Activated CD4-positive, alpha-beta memory T cell treated with anti-CD3 and anti-CD28 coated beads, Interleukin-2, amount 10 ng/mL, durations not matched to agents 7 days and 5 days (primary cell): ENCODE measurements at regions of chr6 and their contacts with region 1.

Region 1: DNA sequence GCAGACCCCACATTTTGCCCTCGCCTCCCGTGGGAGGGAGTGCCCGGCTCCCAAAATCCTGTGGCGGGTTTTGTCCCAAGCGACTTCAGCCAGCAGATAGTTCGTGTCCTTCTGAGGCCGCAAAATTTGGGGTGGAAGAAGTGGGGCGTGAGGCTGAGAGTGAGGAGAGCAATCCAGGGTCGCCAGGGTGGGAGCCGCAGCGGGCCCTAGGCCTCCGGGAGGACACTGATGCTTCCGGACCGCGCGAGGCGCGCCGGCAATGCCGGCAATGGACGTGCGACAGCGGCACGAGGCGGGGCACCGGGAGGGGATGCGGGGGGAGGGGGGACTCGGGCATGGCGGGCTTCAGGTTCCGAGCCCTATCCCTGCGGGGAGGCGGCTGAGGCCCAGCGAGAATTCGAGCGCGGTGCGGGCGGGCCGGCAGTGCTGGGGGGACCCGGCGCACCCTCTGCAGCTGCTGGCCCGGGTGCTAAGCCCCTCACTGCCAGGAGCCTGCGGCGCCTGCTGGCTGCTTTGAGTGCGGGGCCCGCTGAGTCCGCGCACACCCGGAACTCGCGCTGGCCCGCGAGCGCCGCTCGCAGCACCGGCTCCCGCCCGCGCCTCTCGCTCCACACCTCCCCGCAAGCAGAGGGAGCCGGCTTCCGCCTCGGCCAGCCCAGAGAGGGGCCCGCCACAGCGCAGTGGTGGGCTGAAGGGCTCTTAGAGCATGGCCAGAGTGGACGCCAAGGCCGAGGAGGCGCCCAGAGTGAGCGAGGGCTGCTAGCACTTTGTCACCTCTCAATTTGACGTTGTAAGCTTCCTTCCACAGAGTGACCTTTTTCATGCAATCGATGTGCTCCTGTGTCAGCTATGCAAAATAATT is 143.8 kb downstream of the LPA start:
- DNase-seq: peak; percentile 58
- H3K4me3 Mint-ChIP-seq: peak overlapping the region; percentile 90
- H3K27ac Mint-ChIP-seq: peak overlapping the region; percentile 86
- H3K4me1 Mint-ChIP-seq: peaks cover 31% of the 10 kb centered on the region
- H3K27me3 Mint-ChIP-seq: peaks cover 19% of the 10 kb centered on the region

Region 2: GRCh38 chr6:160455541-160456213 is 64.6 kb before region 1 on chr6:
- CTCF ChIA-PET with region 1: interaction called, 10 read pairs
- POLR2A ChIA-PET with region 1: no interaction called
- DNase-seq: peak; percentile 74
- H3K4me3 Mint-ChIP-seq: no peak overlapping the region
- H3K27ac Mint-ChIP-seq: no peak overlapping the region
- H3K4me1 Mint-ChIP-seq: peaks cover 26% of the 10 kb centered on the region
- H3K27me3 Mint-ChIP-seq: peaks cover 6% of the 10 kb centered on the region

Region 3: DNA sequence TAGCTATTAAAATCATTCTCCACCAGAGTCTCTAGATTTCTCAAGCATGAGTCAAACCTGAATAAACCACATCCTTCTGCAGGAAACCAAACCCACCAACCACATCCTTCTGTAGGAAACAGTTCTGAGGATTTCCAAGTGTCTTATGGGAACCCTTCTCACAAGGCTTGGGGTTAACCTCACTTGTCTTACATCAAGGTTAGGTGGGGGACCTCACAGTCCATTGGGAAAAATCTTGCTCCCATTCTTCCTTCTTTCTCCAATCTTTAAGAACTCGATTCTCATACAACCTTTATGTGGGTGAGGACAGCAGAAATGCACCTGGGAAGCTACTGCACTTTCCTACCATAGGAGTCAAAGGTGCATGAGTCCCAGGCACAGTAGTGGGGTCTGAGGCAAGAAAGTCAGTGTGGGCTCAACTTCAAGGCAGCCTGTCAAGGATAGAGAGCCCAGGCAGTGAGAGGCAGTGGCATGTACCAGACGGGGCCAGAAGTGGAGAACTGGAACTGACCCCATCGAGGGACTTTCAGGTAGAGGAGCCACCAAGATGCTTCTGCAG is 57.6 kb before region 1 on chr6:
- CTCF ChIA-PET with region 1: interaction called, 14 read pairs
- POLR2A ChIA-PET with region 1: interaction called, 16 read pairs
- DNase-seq: peak; percentile 77
- H3K4me3 Mint-ChIP-seq: peak overlapping the region; percentile 28
- H3K27ac Mint-ChIP-seq: peak overlapping the region; percentile 58
- H3K4me1 Mint-ChIP-seq: peaks cover 55% of the 10 kb centered on the region
- H3K27me3 Mint-ChIP-seq: peaks cover under 1% of the 10 kb centered on the region

Region 4: DNA sequence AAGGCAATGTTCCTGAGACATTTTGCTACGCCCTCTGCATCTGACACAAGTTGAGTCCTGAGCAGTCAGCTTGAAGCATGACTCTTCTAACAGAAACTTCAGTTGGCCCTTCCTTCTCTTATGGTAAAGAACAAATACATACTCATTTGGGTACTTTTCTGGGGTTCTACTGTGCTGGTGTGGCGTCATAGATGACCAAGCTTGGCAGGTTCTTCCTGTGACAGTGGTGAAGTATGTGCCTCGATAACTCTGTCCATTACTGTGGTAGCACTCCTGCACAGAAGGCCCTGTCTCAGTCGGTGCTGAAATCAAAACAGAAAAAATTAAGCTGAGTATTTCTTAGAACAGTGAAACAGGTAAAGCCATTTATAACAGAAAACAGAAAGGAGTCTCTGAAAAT is 19.6 kb before region 1 on chr6:
- CTCF ChIA-PET with region 1: interaction called, 24 read pairs
- POLR2A ChIA-PET with region 1: interaction called, 6 read pairs
- DNase-seq: peak; percentile 33
- H3K4me3 Mint-ChIP-seq: no peak overlapping the region
- H3K27ac Mint-ChIP-seq: peak overlapping the region; percentile 78
- H3K4me1 Mint-ChIP-seq: peaks cover 10% of the 10 kb centered on the region
- H3K27me3 Mint-ChIP-seq: no peaks in the 10 kb centered on the region

Region 5: GRCh38 chr6:160510199-160510598 is 10.1 kb before region 1 on chr6:
- CTCF ChIA-PET with region 1: interaction called, 25 read pairs
- POLR2A ChIA-PET with region 1: interaction called, 3 read pairs
- DNase-seq: no peak
- H3K4me3 Mint-ChIP-seq: no peak overlapping the region
- H3K27ac Mint-ChIP-seq: no peak overlapping the region
- H3K4me1 Mint-ChIP-seq: no peaks in the 10 kb centered on the region
- H3K27me3 Mint-ChIP-seq: peaks cover 9% of the 10 kb centered on the region

Region 6: DNA sequence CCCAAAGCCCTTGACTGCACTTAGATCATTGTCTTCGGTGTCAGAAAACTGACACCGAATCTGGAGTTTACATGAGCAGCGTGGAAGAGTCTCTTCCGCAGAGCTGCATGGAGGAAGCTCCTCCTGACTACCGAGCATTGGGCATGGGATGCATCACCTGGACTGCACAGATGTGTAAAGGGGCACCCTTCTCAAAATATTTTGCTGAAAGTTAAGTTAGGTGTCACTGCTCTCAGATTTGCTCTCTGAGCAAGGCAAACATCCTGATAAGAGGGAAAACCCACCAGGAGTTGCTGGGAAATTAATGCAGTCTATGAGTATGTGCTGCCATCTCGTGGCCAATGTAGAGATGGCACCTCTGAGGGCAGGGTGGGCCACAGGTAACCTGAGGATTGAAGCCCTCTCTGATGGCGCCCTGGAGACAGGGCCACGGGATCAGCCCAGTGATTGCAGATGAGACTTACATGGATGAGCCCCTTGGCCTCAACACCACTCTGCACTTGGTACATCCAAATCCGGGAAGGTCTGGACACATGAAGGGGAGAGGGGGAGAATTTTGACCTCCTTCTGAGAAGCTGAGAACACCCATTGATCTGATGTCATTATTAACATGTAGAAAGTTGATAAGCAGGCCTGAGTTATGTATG is 13.9 kb after region 1 on chr6:
- CTCF ChIA-PET with region 1: interaction called, 63 read pairs
- POLR2A ChIA-PET with region 1: interaction called, 3 read pairs
- DNase-seq: peak; percentile 57
- H3K4me3 Mint-ChIP-seq: no peak overlapping the region
- H3K27ac Mint-ChIP-seq: no peak overlapping the region
- H3K4me1 Mint-ChIP-seq: no peaks in the 10 kb centered on the region
- H3K27me3 Mint-ChIP-seq: peaks cover 13% of the 10 kb centered on the region

Region 7: GRCh38 chr6:160544802-160545201 is 24.5 kb after region 1 on chr6:
- CTCF ChIA-PET with region 1: no interaction called
- POLR2A ChIA-PET with region 1: no interaction called
- DNase-seq: no peak
- H3K4me3 Mint-ChIP-seq: no peak overlapping the region
- H3K27ac Mint-ChIP-seq: no peak overlapping the region
- H3K4me1 Mint-ChIP-seq: no peaks in the 10 kb centered on the region
- H3K27me3 Mint-ChIP-seq: peaks cover 8% of the 10 kb centered on the region